Right cardiac atrium (tissue), 5 donors: ENCODE measurements at regions of chr4 and their contacts with region 1.

Region 1: GRCh38 chr4:48445704-48446103 is 37.4 kb upstream of the SLC10A4 start:
- DNase-seq: no peak
- ATAC-seq: no peak
- H3K4me3 ChIP-seq: no peak overlapping the region
- H3K27ac ChIP-seq: no peak overlapping the region
- H3K4me1 ChIP-seq: no peaks in the 10 kb centered on the region
- H3K27me3 ChIP-seq: no peaks in the 10 kb centered on the region

Region 2: GRCh38 chr4:48963042-48963679 is 517.5 kb after region 1 on chr4:
- intact Hi-C with region 1: loop called in 1 of 4 experiments (anchors 5 kb)
- DNase-seq: peak; percentile 61 to 73 (median 70)
- ATAC-seq: peak; percentile 81 to 83
- H3K4me3 ChIP-seq: no peak overlapping the region
- H3K27ac ChIP-seq: no peak overlapping the region
- H3K4me1 ChIP-seq: no peaks in the 10 kb centered on the region
- H3K27me3 ChIP-seq: no peaks in the 10 kb centered on the region